Mucosa of descending colon (tissue), 3 donors: ENCODE measurements at regions of chr18 and their contacts with region 1.

Region 1: GRCh38 chr18:50307738-50308470 is 20.4 kb upstream of the CXXC1 start:
- DNase-seq: peak; percentile 91 to 96 (median 94)
- ATAC-seq: peak; percentile 98
- H3K4me3 ChIP-seq: no peak overlapping the region
- H3K4me1 ChIP-seq: peaks cover 4% of the 10 kb centered on the region
- CTCF ChIP-seq: no peak

Region 2: GRCh38 chr18:50266248-50266704 is 41.6 kb before region 1 on chr18 and contains the start of gene CFAP53:
- intact Hi-C with region 1: loop called in 1 of 2 experiments (anchors 5 kb)
- DNase-seq: peak; percentile 92 to 97 (median 93)
- ATAC-seq: peak; percentile 96
- H3K4me3 ChIP-seq: peak within 1 kb of the TSS; percentile 15
- H3K4me1 ChIP-seq: no peaks in the 10 kb centered on the region
- CTCF ChIP-seq: no peak
- total RNA-seq, gene CFAP53: 0.27 to 0.47 TPM in 2 of 3 donors, not detected in the other